ENCODE measurements at regions of chr10 and their contacts with region 1.

Region 1: GRCh38 chr10:92517034-92517655 is 56.7 kb downstream of the IDE start:
- DNase-seq: peak; percentile 80
- H3K4me3 ChIP-seq: no peak overlapping the region
- H3K27ac ChIP-seq: no peak overlapping the region
- H3K4me1 ChIP-seq: no peaks in the 10 kb centered on the region
- H3K27me3 ChIP-seq: no peaks in the 10 kb centered on the region
- CTCF ChIP-seq: peak; percentile 67 to 73
- POLR2A ChIP-seq: no peak

Region 2: DNA sequence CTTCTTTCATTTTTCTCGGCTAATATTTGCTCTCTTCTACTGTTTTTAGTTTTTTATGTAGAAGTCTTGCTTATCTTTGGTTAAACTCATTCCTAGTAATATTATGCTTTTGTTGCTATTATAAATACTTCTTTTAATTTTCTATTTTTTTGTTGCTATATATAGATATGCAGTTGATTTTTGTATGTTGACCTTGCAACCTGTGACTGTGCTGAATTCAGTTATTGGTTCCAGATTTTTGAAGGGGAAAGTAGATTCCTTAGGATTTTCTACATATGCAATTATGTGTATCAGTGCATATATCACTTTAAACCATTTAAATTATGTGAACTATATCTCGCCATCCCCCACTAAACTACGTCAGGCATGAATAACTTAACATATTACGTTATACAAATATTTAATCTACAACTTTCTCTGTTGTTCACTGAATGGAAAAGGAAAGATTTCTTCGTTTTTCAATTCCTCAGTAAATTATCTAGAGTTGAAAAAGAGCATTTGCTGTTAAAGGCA is 14.8 kb before region 1 on chr10:
- CTCF ChIA-PET with region 1: interaction called, 21 read pairs
- POLR2A ChIA-PET with region 1: no interaction called
- dilution Hi-C with region 1: no loop called
- intact Hi-C with region 1: no loop called
- DNase-seq: no peak
- H3K4me3 ChIP-seq: no peak overlapping the region
- H3K27ac ChIP-seq: no peak overlapping the region
- H3K4me1 ChIP-seq: no peaks in the 10 kb centered on the region
- H3K27me3 ChIP-seq: no peaks in the 10 kb centered on the region
- CTCF ChIP-seq: no peak
- POLR2A ChIP-seq: no peak

Region 3: DNA sequence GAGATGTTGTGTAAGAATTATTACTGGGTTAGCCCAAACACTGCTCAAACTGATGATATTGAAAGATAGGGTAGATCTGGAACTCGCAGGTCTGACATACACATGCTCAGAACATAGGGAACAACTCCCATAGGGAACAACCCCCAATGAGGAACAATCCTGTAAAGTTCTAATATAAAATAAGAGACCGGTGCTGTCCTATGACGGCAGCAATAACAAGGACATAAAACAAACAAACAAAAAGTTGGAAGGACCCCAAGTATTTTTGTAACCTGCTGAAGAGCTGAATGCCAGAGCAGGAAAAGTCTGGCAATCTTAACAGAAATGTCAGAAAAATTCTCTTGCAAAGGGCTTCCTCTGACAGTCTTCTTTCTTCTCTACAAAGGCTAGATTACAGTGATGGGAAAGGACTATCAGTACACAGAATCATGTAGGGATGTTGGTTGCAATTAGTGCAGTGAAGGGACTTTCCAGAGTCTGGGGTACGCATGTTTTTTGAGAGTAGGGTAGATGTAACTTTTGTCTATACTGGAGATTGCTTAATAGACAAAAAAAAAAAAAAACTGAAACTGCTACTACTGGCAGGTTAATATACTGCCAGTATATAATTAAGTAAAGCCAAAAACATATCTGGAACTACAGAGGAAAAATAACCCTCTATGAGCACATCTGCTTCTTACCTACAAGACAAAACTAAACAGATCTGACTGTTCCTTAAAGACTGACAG is 21.2 kb after region 1 on chr10:
- CTCF ChIA-PET with region 1: interaction called, 10 read pairs
- POLR2A ChIA-PET with region 1: no interaction called
- dilution Hi-C with region 1: no loop called
- intact Hi-C with region 1: no loop called
- DNase-seq: peak; percentile 43
- H3K4me3 ChIP-seq: no peak overlapping the region
- H3K27ac ChIP-seq: no peak overlapping the region
- H3K4me1 ChIP-seq: no peaks in the 10 kb centered on the region
- H3K27me3 ChIP-seq: no peaks in the 10 kb centered on the region
- CTCF ChIP-seq: no peak
- POLR2A ChIP-seq: no peak

Region 4: DNA sequence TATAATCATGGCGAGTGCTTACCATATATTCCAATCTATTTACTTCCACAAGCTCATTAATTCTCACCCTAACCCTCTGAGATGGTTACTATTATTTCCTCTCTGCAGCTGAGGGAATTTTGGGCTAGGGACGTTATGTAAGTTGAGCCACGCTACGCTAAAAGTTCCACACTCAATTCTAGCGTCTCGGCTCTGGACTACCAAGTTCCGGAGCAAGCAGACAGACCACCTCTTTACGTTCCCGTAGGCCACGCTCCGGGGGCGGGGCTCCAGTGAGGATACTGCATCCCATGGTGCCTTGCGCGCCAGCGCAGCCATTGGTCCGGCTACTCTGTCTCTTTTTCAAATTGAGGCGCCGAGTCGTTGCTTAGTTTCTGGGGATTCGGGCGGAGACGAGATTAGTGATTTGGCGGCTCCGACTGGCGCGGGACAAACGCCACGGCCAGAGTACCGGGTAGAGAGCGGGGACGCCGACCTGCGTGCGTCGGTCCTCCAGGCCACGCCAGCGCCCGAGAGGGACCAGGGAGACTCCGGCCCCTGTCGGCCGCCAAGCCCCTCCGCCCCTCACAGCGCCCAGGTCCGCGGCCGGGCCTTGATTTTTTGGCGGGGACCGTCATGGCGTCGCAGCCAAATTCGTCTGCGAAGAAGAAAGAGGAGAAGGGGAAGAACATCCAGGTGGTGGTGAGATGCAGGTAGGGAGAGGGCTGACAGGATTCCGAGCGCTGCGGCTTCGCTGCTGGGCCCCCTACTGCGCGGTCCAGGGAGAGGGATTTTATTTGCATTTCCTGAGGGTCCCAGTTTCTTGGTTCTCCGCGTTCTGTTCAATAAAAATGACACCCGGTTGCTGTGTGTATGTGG is 75.8 kb after region 1 on chr10 and contains the start of gene KIF11:
- CTCF ChIA-PET with region 1: interaction called, 10 read pairs
- POLR2A ChIA-PET with region 1: no interaction called
- dilution Hi-C with region 1: no loop called
- intact Hi-C with region 1: no loop called
- DNase-seq: peak; percentile 98
- H3K4me3 ChIP-seq: peak within 1 kb of the TSS; percentile 75 to 95 (median 93)
- H3K27ac ChIP-seq: peak within 1 kb of the TSS; percentile 83
- H3K4me1 ChIP-seq: peaks cover 33% of the 10 kb centered on the region
- H3K27me3 ChIP-seq: no peaks in the 10 kb centered on the region
- CTCF ChIP-seq: no peak
- POLR2A ChIP-seq: peak; percentile 96
- total RNA-seq, gene KIF11: 42.6 and 42.8 TPM in 2 replicates

Region 5: DNA sequence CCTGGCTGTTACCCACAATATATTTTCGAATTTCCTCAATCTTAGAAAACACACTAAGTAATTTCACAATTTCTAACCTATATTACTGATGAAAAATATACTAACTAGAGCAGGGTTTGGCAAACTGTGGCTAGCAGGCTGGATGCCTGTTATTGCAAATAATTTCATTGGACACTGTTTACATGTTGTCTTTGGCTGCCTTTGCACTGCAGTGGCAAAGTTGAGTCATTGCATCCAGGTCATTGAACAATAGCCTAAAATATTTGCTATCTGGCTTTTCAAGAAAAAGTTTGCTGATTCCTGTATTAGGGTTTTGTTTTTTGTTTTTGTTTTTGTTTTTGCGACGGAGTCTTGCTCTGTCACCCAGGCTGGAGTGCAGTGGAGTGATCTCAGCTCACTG is 123.0 kb after region 1 on chr10:
- CTCF ChIA-PET with region 1: interaction called, 20 read pairs
- POLR2A ChIA-PET with region 1: no interaction called
- dilution Hi-C with region 1: no loop called
- intact Hi-C with region 1: loop called (anchors 5 kb)
- DNase-seq: peak; percentile 92
- H3K4me3 ChIP-seq: no peak overlapping the region
- H3K27ac ChIP-seq: peak overlapping the region; percentile 48
- H3K4me1 ChIP-seq: peaks cover 18% of the 10 kb centered on the region
- H3K27me3 ChIP-seq: no peaks in the 10 kb centered on the region
- CTCF ChIP-seq: no peak
- POLR2A ChIP-seq: peak; percentile 26

Region 6: GRCh38 chr10:92799591-92800446 is 282.7 kb after region 1 on chr10:
- CTCF ChIA-PET with region 1: no interaction called
- POLR2A ChIA-PET with region 1: no interaction called
- dilution Hi-C with region 1: no loop called
- intact Hi-C with region 1: no loop called
- DNase-seq: peak; percentile 29
- H3K4me3 ChIP-seq: no peak overlapping the region
- H3K27ac ChIP-seq: no peak overlapping the region
- H3K4me1 ChIP-seq: peaks cover 7% of the 10 kb centered on the region
- H3K27me3 ChIP-seq: no peaks in the 10 kb centered on the region
- CTCF ChIP-seq: no peak
- POLR2A ChIP-seq: no peak

Region 7: DNA sequence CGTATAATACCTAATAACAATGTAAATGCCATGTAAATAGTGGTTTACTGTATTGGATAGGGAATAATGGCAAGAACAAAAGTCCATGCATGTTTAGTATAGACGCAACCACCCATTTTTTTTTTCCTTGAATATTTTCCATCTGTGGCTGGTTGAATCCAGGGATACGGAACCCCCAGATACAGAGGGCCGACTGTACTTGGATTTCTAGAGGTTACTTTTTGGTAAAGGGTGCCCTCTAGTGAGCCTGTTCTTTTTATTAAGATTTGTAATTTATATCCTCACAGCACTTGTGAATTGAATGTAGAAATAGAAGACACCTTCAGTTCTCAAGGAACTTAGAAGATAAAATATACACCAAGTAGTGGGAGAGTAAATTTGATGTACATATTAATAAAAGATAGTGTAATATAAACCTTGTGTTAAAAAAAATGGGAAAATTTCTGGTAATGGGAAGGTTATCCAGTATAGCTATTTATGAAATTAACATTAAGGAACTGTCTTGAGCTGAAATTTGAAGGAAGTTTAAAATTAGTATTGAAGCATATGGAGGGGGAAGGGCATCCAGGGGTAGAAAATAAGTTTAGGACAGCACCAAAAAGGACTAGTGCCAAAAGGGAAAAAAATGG is 363.2 kb after region 1 on chr10:
- CTCF ChIA-PET with region 1: interaction called, 6 read pairs
- POLR2A ChIA-PET with region 1: no interaction called
- dilution Hi-C with region 1: no loop called
- intact Hi-C with region 1: loop called (anchors 5 kb)
- DNase-seq: peak; percentile 74
- H3K4me3 ChIP-seq: no peak overlapping the region
- H3K27ac ChIP-seq: no peak overlapping the region
- H3K4me1 ChIP-seq: peaks cover 28% of the 10 kb centered on the region
- H3K27me3 ChIP-seq: no peaks in the 10 kb centered on the region
- CTCF ChIP-seq: peak; percentile 7 to 18
- POLR2A ChIP-seq: no peak

Region 8: GRCh38 chr10:93080350-93081046 is 563.4 kb after region 1 on chr10:
- CTCF ChIA-PET with region 1: no interaction called
- POLR2A ChIA-PET with region 1: no interaction called
- dilution Hi-C with region 1: no loop called
- intact Hi-C with region 1: no loop called
- DNase-seq: no peak
- H3K4me3 ChIP-seq: no peak overlapping the region
- H3K27ac ChIP-seq: no peak overlapping the region
- H3K4me1 ChIP-seq: no peaks in the 10 kb centered on the region
- H3K27me3 ChIP-seq: peaks cover 8 to 11% of the 10 kb centered on the region in 2 experiments
- CTCF ChIP-seq: peak; percentile 75 to 85
- POLR2A ChIP-seq: no peak

Measured in endothelial cell of umbilical vein (primary cell).